Caco-2 (cell line): ENCODE measurements at regions of chr2 and their contacts with region 1.

Region 1: DNA sequence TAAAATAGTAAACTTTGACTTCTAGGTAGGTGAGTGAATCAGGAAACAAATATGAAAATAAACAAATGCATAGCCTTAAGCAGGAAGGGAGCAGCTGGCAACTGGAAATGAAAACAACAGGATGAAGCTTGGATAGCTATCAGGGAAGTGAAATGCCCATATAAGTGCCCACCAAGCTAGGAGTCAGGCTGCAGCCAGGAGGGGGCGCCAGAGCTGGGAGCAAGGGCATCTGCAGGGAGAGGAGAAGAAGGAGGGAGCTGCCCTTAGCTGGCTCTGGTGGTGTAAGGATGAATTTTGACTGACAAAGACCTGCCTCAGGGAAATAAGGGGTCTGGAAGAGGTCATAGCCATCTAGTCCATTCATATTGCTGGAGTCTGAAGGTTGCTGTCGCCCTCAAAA is 298.3 kb downstream of the TDRD15 start:
- DNase-seq: peak; percentile 46 to 56
- H3K4me3 ChIP-seq: no peak overlapping the region
- H3K4me3 Mint-ChIP-seq: no peak overlapping the region
- H3K27ac Mint-ChIP-seq: no peak overlapping the region
- H3K4me1 ChIP-seq: no peaks in the 10 kb centered on the region
- H3K4me1 Mint-ChIP-seq: no peaks in the 10 kb centered on the region
- H3K27me3 ChIP-seq: no peaks in the 10 kb centered on the region
- H3K27me3 Mint-ChIP-seq: no peaks in the 10 kb centered on the region
- CTCF ChIP-seq: peak; percentile 11 to 52

Region 2: GRCh38 chr2:21372654-21373053 is 49.4 kb before region 1 on chr2:
- CTCF ChIA-PET with region 1: no interaction called
- POLR2A ChIA-PET with region 1: no interaction called
- intact Hi-C with region 1: loop called (anchors 2 kb)
- DNase-seq: peak in 1 of 2 experiments; percentile 46
- H3K4me3 ChIP-seq: no peak overlapping the region
- H3K4me3 Mint-ChIP-seq: no peak overlapping the region
- H3K27ac Mint-ChIP-seq: no peak overlapping the region
- H3K4me1 ChIP-seq: no peaks in the 10 kb centered on the region
- H3K4me1 Mint-ChIP-seq: no peaks in the 10 kb centered on the region
- H3K27me3 ChIP-seq: no peaks in the 10 kb centered on the region; the same call in 1 of the 2 replicates
- H3K27me3 Mint-ChIP-seq: peaks cover 3% of the 10 kb centered on the region
- CTCF ChIP-seq: peak; percentile 38 to 54